ENCODE measurements at regions of chr19 and their contacts with region 1.

Region 1: DNA sequence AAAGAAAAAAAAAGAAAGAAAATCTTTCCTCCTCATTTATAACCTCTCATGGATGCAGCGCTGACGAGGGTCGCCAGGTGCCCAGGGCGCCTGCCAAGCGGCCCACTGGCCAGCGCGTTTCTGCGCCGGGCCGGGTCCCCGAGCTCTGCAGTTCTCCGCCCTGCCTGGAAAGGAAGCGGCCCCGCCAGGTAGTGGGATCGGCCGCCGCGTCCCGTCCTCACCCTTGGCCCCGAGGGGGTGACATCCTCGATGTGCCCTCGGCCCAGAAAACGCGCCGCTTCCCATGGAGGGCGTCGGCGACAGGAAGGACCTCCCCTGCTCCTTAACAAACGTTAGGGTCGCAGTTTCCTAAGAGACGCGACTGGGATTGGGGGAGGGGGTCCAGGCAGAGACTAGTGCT is 56.9 kb downstream of the ZNF726 start:
- DNase-seq: no peak
- ATAC-seq: no peak
- H3K4me3 ChIP-seq: peak overlapping the region in 4 of 10 donors; percentile 7 to 33 (median 23)
- H3K27ac ChIP-seq: no peak overlapping the region
- H3K4me1 ChIP-seq: peaks cover 0 to 9% (median 0%) of the 10 kb centered on the region in 9 donors
- H3K27me3 ChIP-seq: peaks cover 0 to 59% (median 44%) of the 10 kb centered on the region in 7 donors
- CTCF ChIP-seq: no peak

Region 2: GRCh38 chr19:23872282-23872919 is 99.2 kb before region 1 on chr19:
- intact Hi-C with region 1: loop called in 7 of 10 experiments (anchors 2 to 5 kb)
- DNase-seq: no peak
- ATAC-seq: no peak
- H3K4me3 ChIP-seq: no peak overlapping the region
- H3K27ac ChIP-seq: no peak overlapping the region
- H3K4me1 ChIP-seq: no peaks in the 10 kb centered on the region
- H3K27me3 ChIP-seq: peaks cover 0 to 7% (median 0%) of the 10 kb centered on the region in 7 donors
- CTCF ChIP-seq: no peak